GM12878 (cell line): ENCODE measurements at regions of chr2 and their contacts with region 1.

Region 1: DNA sequence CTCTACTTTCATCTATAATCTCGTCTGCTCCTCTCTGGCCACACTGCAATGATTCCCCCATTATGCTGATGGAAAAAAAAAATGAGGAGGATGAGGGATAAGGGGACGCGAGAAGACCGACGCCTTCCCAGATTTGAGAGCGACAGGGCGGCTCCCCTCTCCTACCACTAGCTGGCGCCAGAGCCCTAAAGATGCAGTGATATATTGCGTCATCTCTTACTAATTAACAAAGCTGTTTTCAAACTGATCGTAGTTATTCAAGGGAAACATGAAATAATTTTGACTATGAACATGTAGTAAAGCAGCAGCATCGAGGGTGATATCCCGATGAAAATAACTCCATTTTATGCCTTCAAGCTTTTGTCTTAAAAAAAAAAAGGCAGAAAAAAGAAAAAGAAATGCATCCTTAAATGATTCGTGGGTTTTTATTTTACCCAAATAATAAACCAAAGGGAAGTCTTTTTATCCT is 48.0 kb upstream of the HNRNPA3 start:
- DNase-seq: peak; percentile 56
- ATAC-seq: peak; percentile 64
- H3K4me3 ChIP-seq: peak overlapping the region; percentile 63
- H3K27ac ChIP-seq: peak overlapping the region; percentile 97
- H3K4me1 ChIP-seq: peaks cover 16% of the 10 kb centered on the region
- H3K27me3 ChIP-seq: no peaks in the 10 kb centered on the region
- CTCF ChIP-seq: peak; percentile 100; a peak in 5 of 6 replicates
- EP300 ChIP-seq: no peak; a peak in 1 of 4 replicates
- POLR2A ChIP-seq: no peak
- RAD21 ChIP-seq: peak; percentile 99

Region 2: GRCh38 chr2:177175917-177176668 is 11.5 kb after region 1 on chr2:
- CTCF ChIA-PET with region 1: interaction called, 11 read pairs
- POLR2A ChIA-PET with region 1: interaction called, 7 read pairs
- RAD21 ChIA-PET with region 1: interaction called, 13 read pairs
- SMC1A ChIA-PET with region 1: interaction called, 10 read pairs
- in situ Hi-C with region 1: no loop called
- intact Hi-C with region 1: no loop called
- DNase-seq: no peak
- ATAC-seq: no peak; the same call in 2 of the 3 replicates
- H3K4me3 ChIP-seq: no peak overlapping the region
- H3K27ac ChIP-seq: no peak overlapping the region
- H3K4me1 ChIP-seq: peaks cover 5% of the 10 kb centered on the region; the same call in 1 of the 2 replicates
- H3K27me3 ChIP-seq: no peaks in the 10 kb centered on the region
- CTCF ChIP-seq: no peak
- EP300 ChIP-seq: no peak
- POLR2A ChIP-seq: no peak
- RAD21 ChIP-seq: no peak

Region 3: DNA sequence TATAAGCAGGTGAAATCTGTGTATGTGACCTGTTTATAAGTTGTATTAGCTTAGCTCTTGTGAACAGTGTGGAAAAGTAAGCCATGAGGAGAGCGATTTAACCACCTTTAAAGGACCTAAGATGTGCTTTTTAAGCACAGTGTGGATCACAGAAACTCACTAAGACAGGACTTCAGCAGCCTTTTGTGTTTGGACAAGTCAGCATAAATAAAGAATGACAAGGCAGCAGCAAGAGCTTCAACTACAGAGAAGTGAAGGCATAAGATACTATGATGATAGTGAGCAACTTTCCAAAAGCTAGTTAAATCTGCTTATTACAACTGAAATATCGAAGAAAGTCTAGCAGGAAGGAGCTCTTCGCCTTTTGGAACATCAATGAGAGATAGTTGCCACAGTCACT is 56.9 kb after region 1 on chr2:
- CTCF ChIA-PET with region 1: interaction called, 6 read pairs
- POLR2A ChIA-PET with region 1: interaction called, 6 read pairs
- RAD21 ChIA-PET with region 1: no interaction called
- SMC1A ChIA-PET with region 1: interaction called, 10 read pairs
- in situ Hi-C with region 1: no loop called
- intact Hi-C with region 1: no loop called
- DNase-seq: no peak
- ATAC-seq: no peak
- H3K4me3 ChIP-seq: no peak overlapping the region
- H3K27ac ChIP-seq: no peak overlapping the region
- H3K4me1 ChIP-seq: no peaks in the 10 kb centered on the region
- H3K27me3 ChIP-seq: no peaks in the 10 kb centered on the region
- CTCF ChIP-seq: no peak
- EP300 ChIP-seq: no peak
- POLR2A ChIP-seq: no peak
- RAD21 ChIP-seq: no peak

Region 4: GRCh38 chr2:177275041-177276020 is 110.7 kb after region 1 on chr2:
- CTCF ChIA-PET with region 1: interaction called, 213 read pairs
- POLR2A ChIA-PET with region 1: no interaction called
- RAD21 ChIA-PET with region 1: interaction called, 42 read pairs
- SMC1A ChIA-PET with region 1: interaction called, 55 read pairs
- in situ Hi-C with region 1: no loop called
- intact Hi-C with region 1: no loop called
- DNase-seq: no peak
- ATAC-seq: no peak
- H3K4me3 ChIP-seq: no peak overlapping the region
- H3K27ac ChIP-seq: no peak overlapping the region
- H3K4me1 ChIP-seq: no peaks in the 10 kb centered on the region; the same call in 1 of the 2 replicates
- H3K27me3 ChIP-seq: no peaks in the 10 kb centered on the region
- CTCF ChIP-seq: no peak
- EP300 ChIP-seq: no peak
- POLR2A ChIP-seq: no peak
- RAD21 ChIP-seq: no peak

Region 5: GRCh38 chr2:177314194-177314593 is 149.6 kb after region 1 on chr2:
- CTCF ChIA-PET with region 1: interaction called, 16 read pairs
- POLR2A ChIA-PET with region 1: no interaction called
- RAD21 ChIA-PET with region 1: no interaction called
- SMC1A ChIA-PET with region 1: interaction called, 6 read pairs
- in situ Hi-C with region 1: no loop called
- intact Hi-C with region 1: no loop called
- DNase-seq: no peak
- ATAC-seq: no peak
- H3K4me3 ChIP-seq: no peak overlapping the region
- H3K27ac ChIP-seq: no peak overlapping the region
- H3K4me1 ChIP-seq: no peaks in the 10 kb centered on the region
- H3K27me3 ChIP-seq: no peaks in the 10 kb centered on the region
- CTCF ChIP-seq: no peak
- EP300 ChIP-seq: no peak
- POLR2A ChIP-seq: no peak
- RAD21 ChIP-seq: no peak

Region 6: DNA sequence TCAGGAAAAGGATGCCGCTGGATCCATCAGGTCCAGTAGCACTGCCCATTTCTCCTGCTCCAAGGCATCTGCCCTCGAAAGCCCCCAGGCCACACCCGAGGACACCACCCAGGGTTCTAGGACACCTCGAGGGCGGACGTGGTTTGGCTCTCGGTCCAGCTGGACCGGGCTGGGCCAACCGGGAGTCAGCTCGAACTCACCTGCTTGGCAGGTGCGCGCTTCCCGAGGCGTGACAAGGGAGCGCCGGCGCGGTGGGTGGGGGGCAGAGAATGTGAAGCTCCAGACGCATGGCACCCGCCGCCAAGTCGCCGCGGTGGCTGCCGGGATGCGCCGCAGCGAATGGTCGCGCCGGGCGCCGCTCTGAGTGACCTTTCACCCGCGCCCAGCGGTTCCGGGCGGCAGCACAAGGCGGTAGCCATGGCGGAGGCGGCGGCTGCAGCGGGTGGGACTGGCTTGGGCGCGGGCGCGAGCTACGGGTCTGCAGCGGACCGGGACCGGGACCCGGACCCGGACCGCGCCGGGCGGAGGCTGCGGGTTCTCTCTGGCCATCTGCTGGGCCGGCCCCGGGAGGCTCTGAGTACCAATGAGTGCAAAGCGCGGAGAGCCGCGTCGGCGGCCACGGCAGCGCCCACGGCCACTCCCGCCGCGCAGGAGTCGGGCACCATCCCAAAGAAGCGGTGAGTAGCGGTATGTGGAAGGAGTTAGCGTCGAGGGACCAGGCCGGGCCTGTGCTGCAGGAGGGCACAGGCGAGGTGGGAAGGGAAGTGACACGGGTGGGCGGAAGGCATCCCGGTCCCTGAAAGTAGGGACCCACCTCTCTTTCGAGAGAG is 228.0 kb after region 1 on chr2 and contains the start of gene AGPS:
- CTCF ChIA-PET with region 1: interaction called, 15 read pairs
- POLR2A ChIA-PET with region 1: no interaction called
- RAD21 ChIA-PET with region 1: interaction called, 5 read pairs
- SMC1A ChIA-PET with region 1: interaction called, 6 read pairs
- in situ Hi-C with region 1: no loop called
- intact Hi-C with region 1: no loop called
- DNase-seq: peak; percentile 30
- ATAC-seq: peak; percentile 92
- H3K4me3 ChIP-seq: peak within 1 kb of the TSS; percentile 91
- H3K27ac ChIP-seq: peak within 1 kb of the TSS; percentile 66
- H3K4me1 ChIP-seq: peaks cover 20% of the 10 kb centered on the region
- H3K27me3 ChIP-seq: no peaks in the 10 kb centered on the region
- CTCF ChIP-seq: no peak
- EP300 ChIP-seq: no peak
- POLR2A ChIP-seq: peak; percentile 94
- RAD21 ChIP-seq: no peak
- polyA plus RNA-seq, gene AGPS: 7.9 to 11.1 TPM

Region 7: DNA sequence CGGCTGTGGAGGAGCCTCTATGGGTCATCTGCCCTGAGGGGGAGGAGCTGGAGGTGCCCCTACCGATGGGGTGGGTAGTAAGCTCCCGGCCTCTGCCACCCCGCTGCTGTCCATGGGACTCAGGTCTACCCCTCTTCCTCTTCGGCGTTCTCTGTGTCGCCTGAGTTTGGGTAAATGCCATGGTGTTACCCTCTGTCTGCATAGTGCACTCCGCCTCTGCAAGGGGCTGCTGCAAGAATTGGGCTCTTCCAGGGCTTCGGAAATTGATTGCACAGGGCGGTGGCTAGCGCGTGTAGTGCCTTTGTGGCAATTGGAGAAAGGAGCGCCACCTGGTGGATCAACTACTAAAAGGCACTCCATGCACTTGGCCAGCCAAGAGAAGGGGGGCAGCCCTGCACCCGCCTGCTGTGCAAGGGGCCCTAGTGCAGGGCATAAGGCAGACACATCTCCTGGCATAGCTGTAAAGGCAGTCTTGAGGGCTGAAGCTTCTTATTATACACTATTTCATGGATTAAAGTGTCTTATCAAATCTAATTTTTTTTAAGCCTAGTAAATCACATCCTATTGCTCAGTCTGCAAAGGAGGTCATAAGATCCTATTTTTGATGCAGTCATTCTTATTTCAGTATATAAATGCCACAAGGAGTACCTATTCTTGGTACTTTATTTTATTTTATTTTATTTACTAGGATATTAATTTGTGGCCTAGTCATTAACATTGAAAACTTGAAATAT is 599.1 kb after region 1 on chr2:
- CTCF ChIA-PET with region 1: interaction called, 10 read pairs
- POLR2A ChIA-PET with region 1: no interaction called
- RAD21 ChIA-PET with region 1: no interaction called
- SMC1A ChIA-PET with region 1: interaction called, 3 read pairs
- in situ Hi-C with region 1: no loop called
- intact Hi-C with region 1: no loop called
- DNase-seq: no peak
- ATAC-seq: peak; percentile 100
- H3K4me3 ChIP-seq: no peak overlapping the region
- H3K27ac ChIP-seq: no peak overlapping the region
- H3K4me1 ChIP-seq: no peaks in the 10 kb centered on the region
- H3K27me3 ChIP-seq: no peaks in the 10 kb centered on the region
- CTCF ChIP-seq: peak; percentile 76 to 85 (median 79)
- EP300 ChIP-seq: no peak
- POLR2A ChIP-seq: no peak
- RAD21 ChIP-seq: peak; percentile 45; the same call in 1 of the 2 replicates